K562 (cell line): ENCODE measurements at regions of chr19 and their contacts with region 1.

Region 1: DNA sequence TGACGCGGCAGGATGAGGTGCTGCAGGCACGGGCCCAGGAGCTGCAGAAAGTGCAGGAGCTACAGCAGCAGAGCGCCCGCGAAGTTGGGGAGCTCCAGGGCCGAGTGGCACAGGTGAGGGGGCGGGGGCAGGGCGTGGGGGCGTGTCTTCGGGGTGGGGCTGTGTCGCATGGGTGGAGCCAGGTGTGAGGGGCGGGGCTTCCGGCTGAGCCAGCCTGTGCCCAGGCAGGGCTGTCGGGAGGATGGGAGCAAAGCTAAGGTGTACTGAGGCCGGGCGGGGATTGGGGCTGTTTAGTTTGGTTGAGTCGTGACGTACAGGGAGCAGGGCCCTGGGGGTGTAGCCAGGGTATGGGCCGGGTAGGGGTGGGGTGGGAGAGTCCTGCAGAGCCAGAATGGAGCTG is 62.3 kb downstream of the KCNC3 start:
- DNase-seq: peak; percentile 59 to 98 (median 94)
- ATAC-seq: peak; percentile 95
- H3K4me3 ChIP-seq: no peak overlapping the region
- H3K27ac ChIP-seq: no peak overlapping the region
- H3K4me1 ChIP-seq: peaks cover 25 to 38% of the 10 kb centered on the region in 2 experiments; a peak in 4 of 5 replicates
- H3K27me3 ChIP-seq: peaks cover 0 to 8% of the 10 kb centered on the region in 2 experiments; a peak in 2 of 5 replicates
- CTCF ChIP-seq: no peak
- EP300 ChIP-seq: no peak
- POLR2A ChIP-seq: no peak
- RAD21 ChIP-seq: no peak

Region 2: GRCh38 chr19:50167314-50167721 is 99.6 kb before region 1 on chr19:
- CTCF ChIA-PET with region 1: no interaction called
- POLR2A ChIA-PET with region 1: no interaction called
- in situ Hi-C with region 1: loop called (anchors 5 kb)
- intact Hi-C with region 1: loop called (anchors 5 kb)
- DNase-seq: no peak
- ATAC-seq: no peak
- H3K4me3 ChIP-seq: no peak overlapping the region
- H3K27ac ChIP-seq: no peak overlapping the region
- H3K4me1 ChIP-seq: peaks cover 0 to 19% of the 10 kb centered on the region in 2 experiments; a peak in 3 of 5 replicates
- H3K27me3 ChIP-seq: peaks cover 0 to 31% of the 10 kb centered on the region in 2 experiments; a peak in 2 of 5 replicates
- CTCF ChIP-seq: no peak
- EP300 ChIP-seq: no peak
- POLR2A ChIP-seq: no peak
- RAD21 ChIP-seq: no peak

Region 3: GRCh38 chr19:50329146-50329925 is 62.4 kb after region 1 on chr19 and contains the start of gene KCNC3:
- CTCF ChIA-PET with region 1: interaction called, 8 read pairs
- POLR2A ChIA-PET with region 1: interaction called, 3 read pairs
- in situ Hi-C with region 1: no loop called
- intact Hi-C with region 1: loop called (anchors 5 kb)
- DNase-seq: peak; percentile 93 to 100 (median 97)
- ATAC-seq: peak; percentile 79
- H3K4me3 ChIP-seq: peak within 1 kb of the TSS; percentile 44
- H3K27ac ChIP-seq: peak within 1 kb of the TSS; percentile 76
- H3K4me1 ChIP-seq: peaks cover 44 to 85% of the 10 kb centered on the region in 2 experiments
- H3K27me3 ChIP-seq: no peaks in the 10 kb centered on the region
- CTCF ChIP-seq: no peak
- EP300 ChIP-seq: no peak
- POLR2A ChIP-seq: peak; percentile 89
- RAD21 ChIP-seq: no peak
- polyA plus RNA-seq, gene KCNC3: 0.03 to 0.06 TPM

Region 4: DNA sequence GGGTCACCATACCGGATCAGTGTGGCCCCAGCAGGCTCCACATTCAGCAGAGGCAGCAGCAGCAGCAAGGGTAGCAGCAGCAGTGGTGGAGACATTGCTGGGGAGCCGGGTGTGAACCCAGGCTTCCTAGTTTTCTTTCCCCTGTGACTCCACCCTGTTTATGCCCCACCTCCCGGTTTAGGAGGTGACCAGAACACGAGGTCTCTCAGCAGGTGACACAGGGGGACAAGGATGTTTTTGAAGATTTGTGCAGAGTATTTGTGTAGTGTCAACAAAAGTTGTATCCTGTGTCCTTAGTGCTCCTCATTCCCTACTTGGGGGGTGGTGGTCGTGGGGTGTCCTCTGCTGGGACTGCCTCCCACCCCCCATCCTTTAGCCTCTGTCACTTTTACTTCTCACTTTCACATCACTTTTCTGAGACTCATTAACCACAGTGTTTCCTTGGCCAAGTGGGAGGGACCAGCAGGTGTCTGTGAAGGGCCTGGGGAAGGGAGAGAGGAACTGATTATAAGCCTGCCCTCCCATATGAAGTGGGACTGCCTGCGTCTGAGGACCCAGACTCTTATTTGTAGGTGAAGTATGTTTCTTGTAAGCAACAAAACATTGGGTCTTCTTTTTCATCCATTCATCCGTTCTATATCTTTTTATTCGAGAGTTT is 77.9 kb after region 1 on chr19:
- CTCF ChIA-PET with region 1: no interaction called
- POLR2A ChIA-PET with region 1: no interaction called
- in situ Hi-C with region 1: no loop called
- intact Hi-C with region 1: loop called (anchors 5 kb)
- DNase-seq: no peak
- ATAC-seq: no peak
- H3K4me3 ChIP-seq: no peak overlapping the region
- H3K27ac ChIP-seq: no peak overlapping the region
- H3K4me1 ChIP-seq: peaks cover 0 to 2% of the 10 kb centered on the region in 2 experiments; a peak in 1 of 5 replicates
- H3K27me3 ChIP-seq: no peaks in the 10 kb centered on the region
- CTCF ChIP-seq: no peak
- EP300 ChIP-seq: no peak
- POLR2A ChIP-seq: no peak
- RAD21 ChIP-seq: no peak